ENCODE measurements at regions of chr3 and their contacts with region 1.

Region 1: GRCh38 chr3:117997201-117998049 is 1037.2 kb downstream of the IGSF11 start:
- DNase-seq: peak; percentile 86
- ATAC-seq: peak; percentile 84
- H3K4me3 ChIP-seq: peak overlapping the region; percentile 72
- H3K27ac ChIP-seq: peak overlapping the region; percentile 42
- H3K4me1 ChIP-seq: peaks cover 4% of the 10 kb centered on the region; the same call in 1 of the 2 replicates
- H3K27me3 ChIP-seq: no peaks in the 10 kb centered on the region
- CTCF ChIP-seq: peak; percentile 86
- POLR2A ChIP-seq: peak; percentile 40; the same call in 1 of the 2 replicates
- RAD21 ChIP-seq: peak; percentile 87

Region 2: GRCh38 chr3:116863822-116864589 is 1133.4 kb before region 1 on chr3:
- CTCF ChIA-PET with region 1: no interaction called
- POLR2A ChIA-PET with region 1: no interaction called
- dilution Hi-C with region 1: no loop called
- in situ Hi-C with region 1: no loop called
- intact Hi-C with region 1: loop called (anchors 1 kb)
- DNase-seq: peak; percentile 64
- ATAC-seq: peak; percentile 66
- H3K4me3 ChIP-seq: peak overlapping the region; percentile 82
- H3K27ac ChIP-seq: no peak overlapping the region
- H3K4me1 ChIP-seq: no peaks in the 10 kb centered on the region
- H3K27me3 ChIP-seq: no peaks in the 10 kb centered on the region
- CTCF ChIP-seq: peak; percentile 66
- POLR2A ChIP-seq: no peak
- RAD21 ChIP-seq: peak; percentile 74

Region 3: GRCh38 chr3:117407317-117407716 is 590.1 kb before region 1 on chr3:
- CTCF ChIA-PET with region 1: no interaction called
- POLR2A ChIA-PET with region 1: no interaction called
- dilution Hi-C with region 1: no loop called
- in situ Hi-C with region 1: loop called (anchors 25 kb)
- intact Hi-C with region 1: no loop called
- DNase-seq: peak; percentile 27
- ATAC-seq: no peak
- H3K4me3 ChIP-seq: no peak overlapping the region
- H3K27ac ChIP-seq: no peak overlapping the region
- H3K4me1 ChIP-seq: peaks cover 2% of the 10 kb centered on the region; the same call in 1 of the 2 replicates
- H3K27me3 ChIP-seq: no peaks in the 10 kb centered on the region
- CTCF ChIP-seq: peak; percentile 34
- POLR2A ChIP-seq: no peak
- RAD21 ChIP-seq: peak; percentile 34

Region 4: GRCh38 chr3:117622171-117622841 is 375.1 kb before region 1 on chr3:
- CTCF ChIA-PET with region 1: no interaction called
- POLR2A ChIA-PET with region 1: no interaction called
- dilution Hi-C with region 1: no loop called
- in situ Hi-C with region 1: no loop called
- intact Hi-C with region 1: loop called (anchors 5 kb)
- DNase-seq: peak; percentile 95
- ATAC-seq: peak; percentile 93
- H3K4me3 ChIP-seq: no peak overlapping the region
- H3K27ac ChIP-seq: peak overlapping the region; percentile 58
- H3K4me1 ChIP-seq: peaks cover 4% of the 10 kb centered on the region
- H3K27me3 ChIP-seq: no peaks in the 10 kb centered on the region
- CTCF ChIP-seq: no peak
- POLR2A ChIP-seq: no peak
- RAD21 ChIP-seq: no peak

Region 5: GRCh38 chr3:117681619-117682018 is 315.8 kb before region 1 on chr3:
- CTCF ChIA-PET with region 1: no interaction called
- POLR2A ChIA-PET with region 1: no interaction called
- dilution Hi-C with region 1: no loop called
- in situ Hi-C with region 1: no loop called
- intact Hi-C with region 1: no loop called
- DNase-seq: peak; percentile 87
- ATAC-seq: peak; percentile 92
- H3K4me3 ChIP-seq: no peak overlapping the region
- H3K27ac ChIP-seq: no peak overlapping the region
- H3K4me1 ChIP-seq: peaks cover 2% of the 10 kb centered on the region; the same call in 1 of the 2 replicates
- H3K27me3 ChIP-seq: no peaks in the 10 kb centered on the region
- CTCF ChIP-seq: no peak
- POLR2A ChIP-seq: no peak
- RAD21 ChIP-seq: no peak

Region 6: DNA sequence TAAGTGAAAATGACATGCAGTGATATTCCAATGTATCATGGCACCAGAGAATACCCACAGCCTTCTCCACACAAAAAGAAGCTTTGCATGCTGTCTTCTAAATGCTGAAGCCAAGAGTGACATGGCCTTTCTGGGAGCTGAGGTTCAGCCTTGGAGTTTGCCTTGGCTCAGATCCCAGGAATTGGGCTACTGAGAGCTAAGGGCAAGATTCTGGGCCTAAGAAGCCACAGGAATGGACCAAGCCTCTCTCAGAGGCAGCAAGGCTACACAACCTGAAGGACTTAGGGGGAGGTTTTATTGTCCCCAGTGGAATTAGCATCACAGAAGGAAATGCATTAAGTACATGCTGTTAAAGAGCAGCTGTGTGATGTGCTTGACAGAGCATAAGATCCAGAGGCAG is 209.4 kb before region 1 on chr3:
- CTCF ChIA-PET with region 1: no interaction called
- POLR2A ChIA-PET with region 1: no interaction called
- dilution Hi-C with region 1: no loop called
- in situ Hi-C with region 1: no loop called
- intact Hi-C with region 1: loop called (anchors 5 kb)
- DNase-seq: peak; percentile 90
- ATAC-seq: peak; percentile 89
- H3K4me3 ChIP-seq: no peak overlapping the region
- H3K27ac ChIP-seq: no peak overlapping the region
- H3K4me1 ChIP-seq: peaks cover 12% of the 10 kb centered on the region
- H3K27me3 ChIP-seq: no peaks in the 10 kb centered on the region
- CTCF ChIP-seq: no peak
- POLR2A ChIP-seq: no peak
- RAD21 ChIP-seq: no peak

Region 7: DNA sequence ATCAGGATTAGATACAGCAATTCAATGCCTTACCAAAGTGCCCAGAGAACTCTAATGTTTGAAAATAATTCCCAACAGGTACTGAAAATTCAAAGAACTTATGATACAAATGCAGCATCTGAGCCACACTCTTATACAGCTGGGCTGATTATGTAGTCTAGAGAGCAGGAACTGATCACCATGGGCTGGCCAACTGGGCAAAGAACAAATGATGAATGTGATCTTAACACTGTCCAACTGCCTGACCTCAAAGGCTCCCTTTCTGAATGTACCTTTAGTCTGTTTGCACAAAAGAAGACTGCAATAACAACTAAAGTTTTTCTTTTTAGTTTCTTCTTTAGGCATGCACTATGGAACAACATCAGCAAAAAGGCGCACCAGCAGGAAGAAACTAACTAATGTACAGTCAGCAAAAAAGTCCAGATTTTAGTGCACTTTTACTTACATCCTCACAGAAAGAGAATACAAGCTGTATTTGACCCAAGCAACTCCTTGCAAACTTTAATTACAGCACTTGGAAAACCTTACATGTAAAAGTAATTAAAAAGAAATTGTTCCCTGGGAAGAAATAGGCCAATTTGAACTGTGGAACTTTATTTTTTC is 57.9 kb before region 1 on chr3:
- CTCF ChIA-PET with region 1: no interaction called
- POLR2A ChIA-PET with region 1: no interaction called
- dilution Hi-C with region 1: no loop called
- in situ Hi-C with region 1: no loop called
- intact Hi-C with region 1: no loop called
- DNase-seq: no peak
- ATAC-seq: no peak
- H3K4me3 ChIP-seq: no peak overlapping the region
- H3K27ac ChIP-seq: no peak overlapping the region
- H3K4me1 ChIP-seq: no peaks in the 10 kb centered on the region
- H3K27me3 ChIP-seq: no peaks in the 10 kb centered on the region
- CTCF ChIP-seq: no peak
- POLR2A ChIP-seq: no peak
- RAD21 ChIP-seq: no peak

Region 8: GRCh38 chr3:118011910-118012309 is 14.5 kb after region 1 on chr3:
- CTCF ChIA-PET with region 1: interaction called, 12 read pairs
- POLR2A ChIA-PET with region 1: no interaction called
- dilution Hi-C with region 1: no loop called
- in situ Hi-C with region 1: no loop called
- intact Hi-C with region 1: no loop called
- DNase-seq: no peak
- ATAC-seq: no peak
- H3K4me3 ChIP-seq: no peak overlapping the region
- H3K27ac ChIP-seq: no peak overlapping the region
- H3K4me1 ChIP-seq: no peaks in the 10 kb centered on the region
- H3K27me3 ChIP-seq: no peaks in the 10 kb centered on the region
- CTCF ChIP-seq: no peak
- POLR2A ChIP-seq: no peak
- RAD21 ChIP-seq: no peak